GM10248 (cell line): ENCODE measurements at regions of chr2 and their contacts with region 1.

Region 1: DNA sequence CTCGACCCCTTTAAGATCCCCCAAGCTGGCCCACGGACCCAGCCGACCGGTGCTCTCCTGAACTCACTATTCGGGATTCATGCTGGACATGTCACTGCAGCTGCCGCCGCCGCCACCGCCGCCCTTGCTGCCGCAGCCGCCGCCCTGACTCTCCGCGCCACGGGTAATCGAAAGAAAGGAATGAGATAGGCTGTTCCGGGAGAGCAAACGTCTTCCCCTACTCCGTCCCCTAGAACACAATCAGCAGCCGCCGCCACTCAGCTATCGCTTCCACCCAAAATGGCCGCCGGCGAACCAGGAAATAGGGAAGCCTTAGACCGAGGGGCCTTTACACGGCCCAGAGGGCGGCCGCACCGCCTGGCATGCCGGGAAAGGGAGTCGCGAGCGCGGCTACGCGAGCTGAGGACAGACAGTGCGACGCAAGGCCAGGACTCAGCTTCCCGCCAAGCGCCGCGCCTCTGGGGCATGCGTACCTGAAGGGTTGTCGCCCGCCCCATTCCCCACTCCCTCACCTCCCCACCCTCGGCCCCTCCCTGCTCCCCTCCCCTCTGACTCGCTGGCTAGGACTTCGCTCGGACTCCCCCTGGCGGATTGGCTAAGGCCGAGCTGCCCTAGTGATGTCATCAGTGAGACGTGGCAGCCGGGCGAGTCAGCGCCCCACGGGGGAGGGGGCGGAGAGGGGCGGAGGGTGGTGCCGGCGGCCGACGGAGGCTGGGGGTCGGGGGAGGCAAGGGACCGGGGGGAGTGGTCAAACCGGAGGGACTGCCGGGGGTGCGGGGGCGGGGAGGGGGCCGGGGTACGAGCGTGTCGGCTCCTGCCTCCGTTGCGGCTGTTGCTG is at the start of gene RAB1A:
- DNase-seq: peak; percentile 98
- CTCF ChIP-seq: peak; percentile 52

Region 2: GRCh38 chr2:64812285-64812684 is 317.8 kb before region 1 on chr2:
- CTCF ChIA-PET with region 1: no interaction called
- POLR2A ChIA-PET with region 1: no interaction called
- DNase-seq: no peak
- CTCF ChIP-seq: no peak

Region 3: DNA sequence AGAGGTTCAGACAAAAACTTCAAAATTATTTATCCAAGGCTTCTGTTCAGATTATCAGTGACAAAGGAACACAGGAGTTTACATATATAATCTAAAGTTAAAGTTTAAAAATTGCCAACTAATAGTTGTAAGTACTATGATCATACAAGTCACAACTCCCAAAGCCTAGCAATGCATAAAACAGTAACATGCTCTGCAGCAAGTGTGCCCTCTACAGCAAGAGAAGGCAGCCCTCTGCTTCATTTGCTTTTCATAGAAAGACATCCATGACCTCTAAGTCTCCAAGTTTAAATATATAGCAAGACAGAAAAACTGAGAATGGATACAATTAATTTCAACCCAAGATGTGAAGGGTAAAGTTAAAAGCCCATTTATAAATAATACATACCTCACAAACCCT is 13.4 kb before region 1 on chr2:
- CTCF ChIA-PET with region 1: interaction called, 19 read pairs
- POLR2A ChIA-PET with region 1: interaction called, 29 read pairs
- DNase-seq: no peak
- CTCF ChIP-seq: no peak

Region 4: DNA sequence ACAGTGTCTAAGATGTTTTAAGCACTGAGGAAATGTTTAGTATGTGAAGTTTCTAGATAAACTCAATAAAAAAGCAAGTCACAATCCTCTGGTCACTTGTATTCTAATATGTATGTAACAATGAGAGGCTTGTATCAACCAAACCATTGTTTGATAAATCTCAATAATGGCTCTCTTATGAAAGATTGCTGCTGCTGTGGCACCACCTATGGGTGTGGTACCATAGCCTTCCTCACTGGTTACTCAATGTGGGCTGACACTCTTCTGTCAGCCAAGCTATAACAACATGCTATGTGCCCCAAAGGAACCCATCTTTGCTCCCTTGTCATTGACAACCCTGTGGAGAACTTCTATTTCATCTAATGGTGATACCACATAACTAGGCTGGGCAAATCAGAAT is 12.5 kb after region 1 on chr2:
- CTCF ChIA-PET with region 1: interaction called, 15 read pairs
- POLR2A ChIA-PET with region 1: interaction called, 8 read pairs
- DNase-seq: no peak
- CTCF ChIP-seq: peak; percentile 23

Region 5: GRCh38 chr2:65227425-65228262 is 97.6 kb after region 1 on chr2 and contains the start of gene ACTR2:
- CTCF ChIA-PET with region 1: interaction called, 4 read pairs
- POLR2A ChIA-PET with region 1: interaction called, 22 read pairs
- DNase-seq: peak; percentile 94
- CTCF ChIP-seq: no peak

Region 6: GRCh38 chr2:65240657-65241056 is 110.6 kb after region 1 on chr2:
- CTCF ChIA-PET with region 1: no interaction called
- POLR2A ChIA-PET with region 1: no interaction called
- DNase-seq: no peak
- CTCF ChIP-seq: no peak